ENCODE measurements at regions of chr11 and their contacts with region 1.

Region 1: DNA sequence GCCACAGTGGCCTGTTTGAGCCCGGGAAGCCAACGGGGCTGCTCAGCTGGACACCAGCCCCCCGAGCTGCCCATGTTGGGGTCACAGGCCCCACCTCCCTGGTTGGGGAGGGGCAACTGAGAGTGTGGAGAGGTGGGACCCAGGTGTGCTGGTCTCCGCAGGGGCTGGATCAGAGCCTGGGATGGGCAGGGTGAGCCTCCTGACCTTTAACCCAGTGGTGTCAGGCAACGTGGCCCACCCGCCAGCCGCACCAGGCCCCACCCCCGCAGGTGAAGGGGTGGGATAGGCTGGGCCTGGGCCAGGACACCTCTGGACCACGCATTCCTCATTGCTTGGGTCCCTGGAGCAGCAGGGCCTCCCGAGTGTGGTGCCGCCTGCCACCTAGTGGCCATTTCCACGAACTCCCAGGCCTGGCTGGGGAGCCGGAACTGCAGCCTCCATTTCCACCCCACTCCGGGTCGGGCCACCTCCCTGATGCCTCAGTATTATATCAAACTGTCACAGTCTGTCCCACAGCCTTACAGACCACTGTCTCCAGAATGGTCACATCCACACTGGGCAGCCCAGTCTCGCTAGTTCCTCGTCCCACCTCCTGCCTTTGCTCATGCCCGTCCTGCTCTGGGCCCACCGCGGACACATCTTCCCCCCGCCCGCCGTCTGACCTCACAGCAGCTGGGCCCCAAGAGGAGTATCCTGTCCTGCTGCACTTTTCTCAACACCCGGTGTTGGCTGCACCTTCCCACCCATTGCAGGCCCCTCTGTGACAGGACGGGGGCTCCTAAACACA is 13.3 kb upstream of the PPP6R3 start:
- DNase-seq: peak; percentile 58 to 93 (median 84)

Region 2: DNA sequence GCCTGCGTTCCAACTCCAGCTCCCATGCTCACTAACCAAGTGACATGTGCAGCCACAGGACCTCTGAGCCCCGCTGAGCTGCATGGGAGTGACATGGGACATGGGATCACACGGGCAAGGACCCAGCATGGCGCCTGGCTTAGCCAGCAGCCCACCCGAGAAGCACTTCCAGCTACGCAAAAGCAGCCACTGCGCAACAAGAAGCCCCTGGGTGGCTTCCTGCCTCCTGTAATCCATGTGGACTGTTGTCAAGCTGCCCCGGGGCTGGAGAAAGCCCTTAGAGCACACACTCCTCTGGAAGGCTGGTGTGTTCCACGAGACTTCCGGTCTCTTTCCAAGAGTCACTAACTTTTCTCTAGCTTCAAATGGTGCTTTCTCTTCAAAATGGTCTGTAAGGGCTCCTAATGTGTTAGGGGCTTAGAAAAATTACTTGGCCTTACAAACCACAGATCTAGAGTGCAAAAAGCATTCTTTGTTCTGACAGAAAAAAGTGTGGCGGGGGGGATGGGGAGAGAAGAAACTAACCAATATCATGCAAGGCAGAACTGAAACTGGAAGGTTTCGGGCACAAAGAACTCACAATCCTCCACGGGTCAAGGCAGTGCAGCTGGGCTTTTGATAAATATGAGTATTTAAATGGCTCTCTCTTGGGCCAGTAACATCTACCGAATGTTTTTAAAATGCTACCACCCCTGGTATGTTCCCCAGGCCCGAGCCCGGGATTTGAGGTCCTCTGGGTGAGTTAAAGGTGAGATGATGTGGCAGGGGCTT is 180.9 kb before region 1 on chr11:
- intact Hi-C with region 1: loop called (anchors 10 kb)
- DNase-seq: peak in 17 of 42 donors; percentile 17 to 76 (median 53)

Measured in head of caudate nucleus (tissue), 42 donors.